Left lung (tissue), 14 donors: ENCODE measurements at regions of chr4 and their contacts with region 1.

Region 1: DNA sequence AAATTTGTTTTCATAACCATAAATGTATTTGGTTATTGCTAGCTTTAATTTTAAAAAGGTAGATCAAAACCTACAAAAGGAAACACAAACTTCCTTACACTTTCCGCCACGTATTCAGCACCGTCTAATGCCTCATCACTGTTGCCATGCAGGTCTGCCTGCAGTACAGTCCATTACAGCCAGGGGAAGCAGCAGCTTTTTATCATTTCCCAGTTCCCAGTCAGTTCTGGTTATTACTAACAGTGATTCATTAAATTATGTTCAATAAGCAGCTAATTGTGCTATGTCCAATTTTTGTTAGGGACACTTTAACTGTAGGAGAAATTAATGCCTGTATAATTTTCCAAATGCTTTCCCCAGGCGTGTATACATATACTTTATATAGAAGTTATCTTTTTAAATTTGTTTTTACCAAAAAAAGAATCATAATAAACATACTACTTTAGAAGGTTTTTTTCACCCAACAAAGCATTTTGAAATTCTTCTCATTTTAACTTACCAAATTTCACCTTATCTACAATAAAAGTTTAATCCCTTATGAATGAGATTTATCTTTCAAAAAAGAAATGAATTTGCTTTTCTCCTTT is 93.3 kb downstream of the ANXA3 start:
- DNase-seq: peak in 2 of 4 donors; percentile 68 to 73
- ATAC-seq: peak; percentile 92
- H3K4me3 ChIP-seq: no peak overlapping the region
- H3K27ac ChIP-seq: peak overlapping the region; percentile 78 to 92
- H3K4me1 ChIP-seq: peaks cover 10 to 61% of the 10 kb centered on the region in 2 donors
- H3K27me3 ChIP-seq: no peaks in the 10 kb centered on the region
- CTCF ChIP-seq: peak; percentile 92 to 93

Region 2: DNA sequence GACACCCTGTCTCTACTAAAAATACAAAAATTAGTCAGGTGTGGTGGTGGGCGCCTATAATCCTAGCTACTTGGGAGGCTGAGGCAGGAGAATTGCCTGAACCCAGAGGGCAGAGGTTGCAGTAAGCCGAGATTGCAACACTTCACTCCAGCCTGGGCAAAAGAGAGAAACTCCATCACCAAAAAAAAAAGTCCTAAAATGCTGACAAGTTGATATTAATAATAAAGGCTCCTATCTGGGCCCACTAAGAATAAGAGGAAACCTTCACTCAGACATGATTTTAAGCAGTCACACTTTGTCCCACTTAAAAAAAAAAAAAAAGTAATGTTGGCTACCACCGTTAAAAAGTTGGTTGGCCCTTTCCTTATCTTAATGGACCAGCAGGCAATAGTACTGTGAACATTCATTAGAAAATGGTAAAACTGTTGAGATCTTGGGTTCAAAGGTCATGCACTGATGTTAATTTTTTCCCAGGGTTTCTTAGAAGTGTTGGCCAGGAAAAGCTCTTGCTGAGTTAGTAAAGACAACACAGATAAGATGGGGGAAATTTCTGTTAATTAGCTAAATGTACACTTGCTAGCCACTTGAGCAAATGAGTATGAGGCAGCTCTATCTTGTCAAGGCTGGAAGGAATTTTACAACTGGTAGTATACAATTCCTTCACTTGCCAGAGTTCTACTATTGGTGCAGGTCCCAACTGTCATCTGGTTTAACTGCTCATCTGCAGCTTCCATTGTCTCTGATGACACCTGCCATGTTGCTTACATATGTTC is 87.7 kb after region 1 on chr4:
- intact Hi-C with region 1: no loop called
- DNase-seq: no peak
- ATAC-seq: no peak
- H3K4me3 ChIP-seq: no peak overlapping the region
- H3K27ac ChIP-seq: no peak overlapping the region
- H3K4me1 ChIP-seq: no peaks in the 10 kb centered on the region
- H3K27me3 ChIP-seq: no peaks in the 10 kb centered on the region
- CTCF ChIP-seq: no peak

Region 3: DNA sequence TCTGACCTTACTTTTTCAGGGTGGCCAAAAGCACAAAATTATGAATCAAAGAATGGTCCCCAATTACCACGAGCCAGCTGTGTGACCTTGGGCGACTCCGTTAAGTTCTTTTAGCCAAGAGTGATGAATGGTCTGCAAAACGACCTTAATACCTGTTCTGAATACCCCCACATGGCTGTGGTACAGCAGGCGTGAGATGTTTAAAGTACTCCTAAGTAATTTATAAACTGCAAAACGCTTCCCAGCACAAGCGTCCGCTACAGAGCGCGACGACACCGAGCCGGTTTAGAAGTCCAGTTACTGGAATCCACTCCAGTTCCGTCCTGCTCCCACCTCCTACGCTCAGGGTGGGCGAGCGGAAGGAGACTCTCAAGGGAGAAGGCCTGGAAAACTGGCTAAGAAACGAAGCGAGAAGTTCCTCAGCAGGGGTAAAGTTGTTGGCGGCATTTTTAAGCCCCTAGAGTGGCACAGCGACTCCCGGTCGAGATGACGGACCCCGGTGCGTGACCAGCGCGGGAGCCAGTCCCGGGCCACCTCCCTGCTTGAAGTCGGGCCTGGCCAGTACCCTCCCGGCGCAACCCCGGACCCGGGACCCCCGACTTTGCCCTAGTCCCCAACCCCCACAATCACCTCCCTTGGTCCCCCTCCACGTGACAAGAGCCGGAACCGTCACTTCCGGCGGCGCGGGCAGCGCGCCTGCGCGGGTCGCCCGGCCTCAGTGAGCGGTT is 130.6 kb after region 1 on chr4:
- intact Hi-C with region 1: loop called in 1 of 2 experiments (anchors 10 kb)
- DNase-seq: peak; percentile 90 to 96 (median 93)
- ATAC-seq: peak; percentile 91
- H3K4me3 ChIP-seq: peak overlapping the region; percentile 60 to 72
- H3K27ac ChIP-seq: peak overlapping the region; percentile 96 to 99
- H3K4me1 ChIP-seq: peaks cover 0 to 45% of the 10 kb centered on the region in 2 donors
- H3K27me3 ChIP-seq: no peaks in the 10 kb centered on the region
- CTCF ChIP-seq: no peak